ENCODE measurements at regions of chr17 and their contacts with region 1.

Region 1: DNA sequence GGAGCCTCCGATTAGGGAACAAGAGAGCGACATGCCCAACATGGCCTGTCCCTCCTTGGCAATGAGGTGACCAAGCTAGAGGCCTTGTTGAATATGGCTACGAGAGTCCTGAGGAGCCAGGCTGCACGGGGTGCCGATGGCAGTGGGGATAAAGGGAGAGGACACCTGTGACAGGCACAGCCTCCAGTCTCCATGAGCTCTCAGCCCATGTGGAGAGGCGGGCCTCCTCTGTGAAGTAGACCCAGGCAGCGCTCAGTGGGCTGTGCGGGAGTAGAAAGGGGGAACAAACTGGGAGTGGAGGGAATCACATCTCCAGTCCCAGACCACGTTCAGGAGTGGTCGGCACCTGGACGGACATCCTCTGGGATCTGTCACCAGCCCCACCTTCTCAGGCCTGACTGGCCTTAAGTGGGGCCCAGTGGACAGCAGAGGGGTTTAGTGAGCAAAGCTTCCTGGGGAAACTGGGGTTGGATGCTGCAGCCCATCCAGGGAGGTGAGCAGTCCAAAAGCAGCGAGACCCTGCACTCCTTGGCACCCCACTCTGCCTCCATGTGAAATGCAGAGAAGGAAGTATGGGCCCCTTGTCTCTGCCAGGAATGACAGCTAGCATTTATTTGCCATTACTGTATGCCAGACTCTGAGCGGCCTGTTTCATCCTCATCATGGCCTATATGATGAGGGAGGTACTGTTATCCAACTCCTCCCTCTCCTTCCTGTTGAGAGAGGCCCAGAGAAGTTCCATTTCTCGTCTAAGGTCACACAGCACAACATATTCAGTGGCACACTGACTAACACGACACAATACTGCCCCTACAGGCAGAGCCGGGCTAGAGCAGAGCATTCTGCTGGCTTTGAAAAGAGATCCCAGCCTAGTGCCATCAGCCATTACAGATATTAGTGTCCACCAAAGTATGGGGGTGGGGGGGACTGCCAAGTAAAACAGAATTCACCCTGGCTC is 4.5 kb upstream of the TMEM92 start:
- DNase-seq: peak; percentile 73
- H3K4me3 ChIP-seq: no peak overlapping the region
- H3K27ac ChIP-seq: peak overlapping the region; percentile 45 to 81 (median 68)
- H3K4me1 ChIP-seq: peaks cover 20 to 46% (median 31%) of the 10 kb centered on the region in 4 donors
- H3K27me3 ChIP-seq: peaks cover 11% of the 10 kb centered on the region
- CTCF ChIP-seq: peak; percentile 67 to 74 (median 69)
- EP300 ChIP-seq: no peak
- POLR2A ChIP-seq: no peak

Region 2: DNA sequence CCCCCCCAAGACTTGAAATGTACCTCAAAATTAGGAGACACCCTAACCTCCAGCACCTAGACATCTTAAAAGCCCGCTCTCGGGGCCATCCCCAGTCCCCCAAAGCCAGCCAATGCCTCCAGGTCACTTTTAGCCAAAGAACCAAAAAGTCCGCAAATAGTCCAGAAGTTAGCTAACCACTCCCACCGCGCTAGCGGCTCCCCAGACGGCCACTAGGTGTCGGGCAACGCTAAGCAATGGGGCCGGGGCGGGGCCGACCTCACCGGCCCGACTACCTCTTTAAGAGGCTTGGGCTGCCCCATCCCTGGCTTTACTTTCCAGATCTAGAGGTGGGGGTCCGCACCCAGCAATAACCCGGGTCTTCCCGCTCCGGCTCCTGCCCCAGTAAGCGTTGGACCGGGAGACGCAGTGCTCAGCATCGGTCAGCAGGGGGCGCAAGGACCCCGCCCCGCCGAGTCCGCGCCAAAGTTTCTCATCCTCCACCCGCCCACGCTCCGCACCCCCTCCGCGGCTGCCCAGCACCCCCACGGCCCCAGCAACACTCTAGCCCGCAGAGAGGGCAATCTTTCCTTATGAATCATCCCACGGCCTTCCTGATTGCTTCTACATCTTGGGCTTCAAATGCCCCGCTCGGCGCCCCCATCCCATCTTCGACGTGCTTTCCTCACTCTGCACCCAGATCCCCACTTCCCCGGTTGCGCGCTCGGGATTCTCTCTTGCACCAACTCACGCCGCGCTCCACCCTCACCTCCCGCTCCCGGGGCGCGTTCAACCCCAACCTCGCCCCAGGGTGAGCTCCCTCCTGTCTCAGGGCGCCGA is 69.1 kb before region 1 on chr17:
- in situ Hi-C with region 1: loop called in 3 of 4 experiments (anchors 5 to 10 kb)
- intact Hi-C with region 1: loop called (anchors 1 kb)
- DNase-seq: peak; percentile 91
- H3K4me3 ChIP-seq: peak overlapping the region; percentile 10 to 56 (median 42)
- H3K27ac ChIP-seq: peak overlapping the region; percentile 88 to 95 (median 89)
- H3K4me1 ChIP-seq: peaks cover 0 to 71% (median 36%) of the 10 kb centered on the region in 4 donors
- H3K27me3 ChIP-seq: peaks cover 56% of the 10 kb centered on the region
- CTCF ChIP-seq: peak; percentile 98 to 100 (median 100)
- EP300 ChIP-seq: no peak
- POLR2A ChIP-seq: no peak

Region 3: DNA sequence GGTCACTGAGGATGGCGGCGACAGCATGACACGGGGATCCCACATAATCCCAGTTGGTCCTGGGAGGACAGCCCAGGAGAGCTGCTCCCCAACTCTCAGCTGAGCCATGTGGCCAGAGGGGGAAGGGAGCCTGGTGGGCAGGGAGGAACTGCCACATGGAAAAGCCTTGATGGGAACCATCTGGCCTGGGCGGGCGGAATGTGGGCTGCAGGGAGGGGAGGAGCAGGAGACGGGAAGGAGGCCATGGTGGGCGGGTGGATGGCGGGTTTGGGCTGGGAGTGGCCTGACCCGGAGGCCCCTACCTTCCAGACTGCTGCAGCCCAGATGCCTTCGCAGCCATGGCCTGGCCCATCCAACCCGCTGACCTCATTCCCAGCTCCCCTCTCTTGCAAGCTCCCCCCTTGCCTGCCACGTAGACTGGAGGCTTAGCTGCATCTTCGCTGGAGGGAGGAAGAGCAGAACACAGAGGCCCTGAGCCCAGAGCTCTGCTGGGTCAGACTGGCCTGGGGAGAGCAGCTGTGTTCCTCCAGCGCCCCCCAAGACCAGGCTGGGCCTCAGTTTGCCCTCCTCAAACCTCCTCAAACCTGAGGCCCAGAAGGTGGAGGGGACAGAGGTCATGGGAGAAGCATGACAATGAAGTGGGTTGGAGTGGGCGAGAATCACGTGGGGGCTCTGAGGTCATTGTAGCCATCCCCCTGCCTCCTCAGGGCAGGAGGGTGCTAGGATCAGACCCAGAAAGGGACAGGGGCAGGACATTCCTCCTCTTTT is 60.1 kb before region 1 on chr17:
- in situ Hi-C with region 1: loop called in 3 of 4 experiments (anchors 5 to 10 kb)
- intact Hi-C with region 1: no loop called
- DNase-seq: peak; percentile 84
- H3K4me3 ChIP-seq: no peak overlapping the region
- H3K27ac ChIP-seq: peak overlapping the region; percentile 88 to 95 (median 92)
- H3K4me1 ChIP-seq: peaks cover 29 to 56% (median 40%) of the 10 kb centered on the region in 4 donors
- H3K27me3 ChIP-seq: peaks cover 20% of the 10 kb centered on the region
- CTCF ChIP-seq: no peak
- EP300 ChIP-seq: peak; percentile 7
- POLR2A ChIP-seq: peak; percentile 52

Region 4: DNA sequence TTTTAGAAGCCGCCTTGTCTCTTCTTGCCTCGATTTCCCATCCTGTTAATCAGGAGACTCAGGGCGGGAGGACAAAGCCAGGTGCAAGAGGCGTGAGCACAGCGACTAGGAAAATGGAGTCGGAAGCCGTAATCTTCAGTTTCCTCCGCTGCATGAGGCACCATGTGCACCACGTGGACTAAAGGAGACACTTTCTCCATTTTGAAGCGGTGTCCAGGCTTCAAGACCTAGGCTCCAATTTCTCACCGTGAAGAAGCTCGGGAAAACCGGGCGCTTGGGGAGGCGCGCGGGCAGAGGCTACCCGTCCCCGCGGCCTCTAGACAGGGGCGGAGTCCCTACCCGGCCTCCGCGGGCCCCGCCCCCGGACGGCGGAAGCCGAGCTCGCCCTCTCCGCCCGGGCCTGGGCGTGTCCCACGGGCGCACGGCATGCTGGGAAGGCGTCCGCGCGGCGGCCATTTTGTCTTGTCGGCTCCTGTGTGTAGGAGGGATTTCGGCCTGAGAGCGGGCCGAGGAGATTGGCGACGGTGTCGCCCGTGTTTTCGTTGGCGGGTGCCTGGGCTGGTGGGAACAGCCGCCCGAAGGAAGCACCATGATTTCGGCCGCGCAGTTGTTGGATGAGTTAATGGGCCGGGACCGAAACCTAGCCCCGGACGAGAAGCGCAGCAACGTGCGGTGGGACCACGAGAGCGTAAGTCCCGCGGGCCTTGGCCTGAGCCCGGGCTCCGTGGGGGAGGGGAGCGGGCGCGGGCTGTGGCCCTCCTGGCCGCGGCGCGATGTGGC is 449.6 kb after region 1 on chr17 and contains the start of gene LUC7L3:
- in situ Hi-C with region 1: no loop called
- intact Hi-C with region 1: no loop called
- DNase-seq: peak; percentile 95
- H3K4me3 ChIP-seq: peak within 1 kb of the TSS; percentile 76 to 94 (median 89)
- H3K27ac ChIP-seq: peak within 1 kb of the TSS; percentile 97 to 99 (median 98)
- H3K4me1 ChIP-seq: peaks cover 21 to 44% (median 36%) of the 10 kb centered on the region in 4 donors
- H3K27me3 ChIP-seq: no peaks in the 10 kb centered on the region
- CTCF ChIP-seq: no peak
- EP300 ChIP-seq: no peak
- POLR2A ChIP-seq: peak; percentile 89
- total RNA-seq, gene LUC7L3: 62.8 to 984 (median 159) TPM